KBM-7 (cell line): ENCODE measurements at regions of chr20 and their contacts with region 1.

Region 1: DNA sequence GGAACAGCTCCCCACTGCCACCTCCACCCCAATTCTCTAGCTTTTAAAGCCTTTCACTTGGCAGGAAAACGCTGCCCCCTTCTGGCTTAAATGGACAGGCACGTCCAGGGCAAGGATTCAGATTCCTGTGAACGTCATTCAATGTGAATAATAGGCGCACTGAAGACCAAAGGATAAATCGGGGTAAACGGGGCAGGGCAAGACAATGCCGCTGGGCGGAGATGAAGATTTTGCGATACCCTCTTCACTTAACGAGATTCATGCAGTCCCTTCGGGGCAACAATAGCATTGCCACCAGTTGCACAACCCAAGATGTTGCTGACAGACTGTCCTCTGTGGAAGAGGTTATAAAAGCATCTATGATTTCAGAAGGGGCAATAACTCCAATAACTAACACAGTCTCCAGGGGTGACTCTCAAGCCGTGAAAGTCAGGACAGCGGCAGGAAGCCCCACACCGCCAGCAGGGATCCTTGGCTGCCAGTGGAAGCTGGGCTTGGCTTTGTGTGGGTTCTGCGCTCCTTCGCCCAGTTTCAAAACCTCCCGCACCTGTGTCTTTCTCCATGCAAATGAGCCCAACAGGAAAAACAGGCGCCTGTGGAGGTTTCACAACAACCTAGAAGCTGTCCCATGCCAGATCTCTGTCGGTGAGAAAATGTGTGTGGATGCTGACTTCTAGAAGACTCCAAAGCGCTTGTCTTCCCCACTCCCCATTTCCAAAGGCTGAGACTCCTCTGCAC is 291.8 kb downstream of the BMP7 start:
- DNase-seq: peak; percentile 31

Region 2: GRCh38 chr20:56909918-56910714 is 64.6 kb before region 1 on chr20:
- in situ Hi-C with region 1: no loop called
- DNase-seq: no peak

Region 3: GRCh38 chr20:57061058-57061900 is 86.6 kb after region 1 on chr20:
- in situ Hi-C with region 1: loop called (anchors 25 kb)
- DNase-seq: peak; percentile 15